ENCODE measurements at regions of chr10 and their contacts with region 1.

Region 1: GRCh38 chr10:108147346-108147745 is 982.8 kb upstream of the SORCS1 start:
- DNase-seq: no peak
- ATAC-seq: no peak
- H3K4me3 ChIP-seq: no peak overlapping the region
- H3K27ac ChIP-seq: no peak overlapping the region
- H3K4me1 ChIP-seq: no peaks in the 10 kb centered on the region
- H3K27me3 ChIP-seq: no peaks in the 10 kb centered on the region
- CTCF ChIP-seq: no peak

Region 2: GRCh38 chr10:108166401-108166800 is 19.1 kb after region 1 on chr10:
- intact Hi-C with region 1: loop called in 1 of 10 experiments (anchors 1 kb)
- DNase-seq: no peak
- ATAC-seq: no peak
- H3K4me3 ChIP-seq: no peak overlapping the region
- H3K27ac ChIP-seq: no peak overlapping the region
- H3K4me1 ChIP-seq: no peaks in the 10 kb centered on the region
- H3K27me3 ChIP-seq: no peaks in the 10 kb centered on the region
- CTCF ChIP-seq: no peak

Measured in heart right ventricle (tissue), 16 donors.